Aorta (tissue), 5 donors: ENCODE measurements at regions of chr1 and their contacts with region 1.

Region 1: DNA sequence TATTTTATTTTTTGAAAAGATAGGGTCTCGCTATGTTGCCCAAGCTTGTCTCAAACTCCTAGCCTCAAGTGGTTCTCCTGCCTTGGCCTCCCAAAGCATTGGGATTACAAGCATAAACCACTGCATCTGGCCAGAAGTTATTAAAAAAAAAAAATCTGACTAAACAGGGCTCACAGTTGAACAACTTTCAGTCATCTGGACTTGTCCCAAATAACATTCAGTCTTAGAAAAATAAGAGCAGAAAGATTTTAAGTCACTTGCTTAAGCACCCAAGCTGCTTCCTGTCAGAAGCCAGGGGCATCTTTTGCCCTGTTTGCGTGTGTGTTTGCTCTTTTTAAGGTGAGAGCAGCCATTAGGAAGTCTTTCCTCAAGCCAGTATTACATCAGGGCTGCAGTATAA is 286.8 kb downstream of the LMO4 start:
- DNase-seq: no peak
- ATAC-seq: no peak
- H3K4me3 ChIP-seq: no peak overlapping the region
- H3K27ac ChIP-seq: peak overlapping the region in 1 of 2 donors; percentile 68
- H3K4me1 ChIP-seq: peaks cover 5 to 9% of the 10 kb centered on the region in 2 donors
- H3K27me3 ChIP-seq: no peaks in the 10 kb centered on the region

Region 2: DNA sequence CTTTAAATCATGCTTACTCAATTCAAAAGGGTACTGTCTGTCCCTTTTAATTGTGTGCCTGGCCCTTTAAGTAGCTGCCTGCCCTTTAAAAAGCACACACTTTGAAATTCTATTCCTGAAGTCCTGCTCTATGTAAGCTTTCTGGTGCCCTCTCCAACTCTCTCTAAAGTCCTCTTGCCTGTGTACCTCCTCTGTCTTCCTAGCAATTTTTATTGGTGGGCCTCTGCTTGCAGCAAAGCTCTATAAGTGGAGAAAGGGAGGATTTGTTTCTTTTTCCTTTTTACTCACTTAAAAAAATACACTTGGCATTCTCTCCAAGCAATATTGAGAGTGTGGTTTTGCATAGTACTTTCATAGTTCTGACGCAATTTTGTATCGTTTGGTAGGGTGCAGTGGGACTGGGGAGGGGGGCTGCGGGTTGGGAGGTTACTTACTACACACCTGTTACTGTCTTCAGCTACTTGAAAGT is 151.4 kb before region 1 on chr1:
- intact Hi-C with region 1: no loop called
- DNase-seq: no peak
- ATAC-seq: no peak
- H3K4me3 ChIP-seq: no peak overlapping the region
- H3K27ac ChIP-seq: no peak overlapping the region
- H3K4me1 ChIP-seq: no peaks in the 10 kb centered on the region
- H3K27me3 ChIP-seq: no peaks in the 10 kb centered on the region

Region 3: DNA sequence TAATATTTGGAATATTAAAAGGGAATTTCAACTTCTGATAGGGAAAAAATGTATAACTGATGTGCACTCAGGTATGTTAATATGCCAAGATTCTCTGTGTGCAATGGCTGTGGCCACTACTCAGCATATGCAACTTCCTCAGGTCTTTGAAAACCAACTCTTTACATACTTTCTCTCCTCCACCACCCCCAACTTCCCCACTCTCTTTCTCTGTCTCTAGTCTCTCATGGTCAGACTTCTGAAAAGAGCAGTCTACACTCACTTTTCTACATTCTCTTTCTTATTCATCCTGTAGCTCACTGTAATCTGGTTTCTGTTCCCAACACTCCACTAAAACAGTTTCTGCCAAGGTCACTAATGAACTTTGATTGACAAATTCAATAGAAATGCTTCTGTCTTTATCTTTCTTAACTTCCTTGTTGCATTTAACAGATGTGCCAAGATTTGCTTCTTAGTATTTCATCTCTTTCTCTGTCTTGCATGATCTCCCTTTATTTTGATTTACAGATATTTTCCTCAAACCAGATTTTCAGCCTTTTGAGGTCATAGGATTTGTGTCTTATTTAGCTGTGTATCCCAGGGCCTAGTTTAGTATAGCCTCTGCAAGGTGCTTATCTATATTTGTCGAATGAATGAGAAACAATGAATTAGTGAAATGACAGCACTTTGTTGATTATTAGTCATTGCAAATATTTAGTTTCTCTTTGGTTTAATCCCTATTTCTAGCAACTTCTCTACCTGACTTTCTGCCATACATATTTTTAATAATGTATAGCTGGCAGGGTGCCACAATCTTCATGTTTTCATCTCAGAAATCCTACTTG is 117.9 kb before region 1 on chr1:
- intact Hi-C with region 1: loop called in 1 of 2 experiments (anchors 10 kb)
- DNase-seq: no peak
- ATAC-seq: no peak
- H3K4me3 ChIP-seq: no peak overlapping the region
- H3K27ac ChIP-seq: no peak overlapping the region
- H3K4me1 ChIP-seq: peaks cover 0 to 2% of the 10 kb centered on the region in 2 donors
- H3K27me3 ChIP-seq: no peaks in the 10 kb centered on the region

Region 4: DNA sequence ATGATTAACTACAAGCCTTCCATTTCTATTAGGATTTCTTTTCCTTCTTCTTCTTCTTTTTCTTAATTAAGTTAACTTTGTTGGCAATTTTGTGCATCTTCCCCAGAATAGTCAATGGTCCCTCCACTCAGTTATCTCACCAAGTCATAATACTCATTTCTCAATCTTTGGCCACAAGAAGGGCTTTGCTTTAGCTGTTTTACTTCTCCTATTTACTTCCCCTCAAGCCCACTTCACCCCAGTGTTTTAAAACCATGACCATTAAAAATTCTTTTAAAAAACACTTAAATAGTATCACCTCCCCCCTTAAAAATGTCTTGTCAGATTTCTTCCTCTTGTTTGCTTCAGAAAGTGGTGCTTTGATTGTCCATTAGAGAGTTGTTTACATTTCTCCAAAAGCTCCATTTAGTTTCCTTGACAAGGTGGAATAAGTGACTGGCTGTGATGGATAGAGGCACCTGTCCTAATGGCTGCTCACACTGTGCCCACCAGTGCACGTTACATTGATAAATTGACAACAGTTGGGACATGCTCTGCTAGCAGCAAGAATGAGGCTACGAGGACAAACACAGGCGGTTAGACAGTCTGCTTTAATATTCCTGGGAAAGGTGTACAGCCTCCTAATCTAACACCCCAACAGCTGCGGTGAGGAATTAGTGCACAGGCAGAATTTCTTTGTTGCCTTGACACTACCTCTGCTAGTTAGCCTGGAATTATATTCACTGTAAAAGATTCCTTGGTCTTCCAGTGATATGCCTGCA is 67.9 kb after region 1 on chr1:
- intact Hi-C with region 1: no loop called
- DNase-seq: no peak
- ATAC-seq: no peak
- H3K4me3 ChIP-seq: peak overlapping the region in 1 of 2 donors; percentile 91
- H3K27ac ChIP-seq: no peak overlapping the region
- H3K4me1 ChIP-seq: peaks cover 0 to 2% of the 10 kb centered on the region in 2 donors
- H3K27me3 ChIP-seq: no peaks in the 10 kb centered on the region

Region 5: DNA sequence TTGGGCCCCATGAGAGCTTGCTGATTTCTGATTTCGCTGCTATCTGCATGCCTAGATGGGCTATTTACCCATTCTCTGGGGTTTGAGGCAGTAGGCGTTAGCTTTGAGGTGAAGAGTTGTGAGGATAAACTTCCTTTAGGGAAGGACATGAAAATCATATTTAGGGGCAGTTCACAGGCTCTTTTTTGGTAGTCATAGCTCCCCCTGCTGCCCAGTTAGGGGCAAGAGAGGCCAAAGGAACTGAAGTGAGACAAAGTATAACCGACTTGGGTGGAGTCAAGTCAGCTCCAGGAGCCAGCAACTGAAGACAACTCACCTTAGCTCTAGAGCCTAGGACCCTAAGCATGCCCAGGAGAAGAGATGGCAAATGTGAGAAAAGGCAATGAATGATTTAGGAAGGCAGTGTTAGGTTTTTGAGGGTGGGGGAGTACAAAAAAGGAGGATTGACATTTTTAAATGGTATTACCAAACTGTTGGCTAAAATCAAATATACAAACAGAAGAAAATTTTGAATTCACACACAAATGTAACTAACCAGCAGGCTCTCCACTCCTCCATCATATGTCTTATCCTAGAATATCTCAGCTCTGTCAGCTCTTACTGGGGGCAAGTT is 338.3 kb after region 1 on chr1:
- intact Hi-C with region 1: loop called in 1 of 2 experiments (anchors 10 kb)
- DNase-seq: peak; percentile 66 to 70
- ATAC-seq: peak; percentile 69
- H3K4me3 ChIP-seq: no peak overlapping the region
- H3K27ac ChIP-seq: no peak overlapping the region
- H3K4me1 ChIP-seq: peaks cover 2 to 6% of the 10 kb centered on the region in 2 donors
- H3K27me3 ChIP-seq: peaks cover 0 to 2% of the 10 kb centered on the region in 2 donors